ENCODE measurements at regions of chr12 and their contacts with region 1.

Region 1: GRCh38 chr12:70242695-70243509 is at the start of gene CNOT2:
- DNase-seq: peak; percentile 85
- ATAC-seq: peak; percentile 89
- H3K4me3 ChIP-seq: peak within 1 kb of the TSS; percentile 91 to 97 (median 91)
- H3K27ac ChIP-seq: peak within 1 kb of the TSS; percentile 98
- H3K4me1 ChIP-seq: peaks cover 43% of the 10 kb centered on the region
- H3K27me3 ChIP-seq: no peaks in the 10 kb centered on the region; a peak in 1 of 5 replicates
- CTCF ChIP-seq: peak; percentile 24; the same call in 1 of the 2 replicates
- EP300 ChIP-seq: 0 out of 4 replicates have a peak, but pooled peaks of 1 of the 2 experiments have one; percentile 10
- POLR2A ChIP-seq: peak; percentile 84 to 86
- RAD21 ChIP-seq: 0 out of 2 replicates have a peak, but pooled peaks have one; percentile 11
- total RNA-seq, gene CNOT2: 76.6 and 82.7 TPM in 2 replicates

Region 2: DNA sequence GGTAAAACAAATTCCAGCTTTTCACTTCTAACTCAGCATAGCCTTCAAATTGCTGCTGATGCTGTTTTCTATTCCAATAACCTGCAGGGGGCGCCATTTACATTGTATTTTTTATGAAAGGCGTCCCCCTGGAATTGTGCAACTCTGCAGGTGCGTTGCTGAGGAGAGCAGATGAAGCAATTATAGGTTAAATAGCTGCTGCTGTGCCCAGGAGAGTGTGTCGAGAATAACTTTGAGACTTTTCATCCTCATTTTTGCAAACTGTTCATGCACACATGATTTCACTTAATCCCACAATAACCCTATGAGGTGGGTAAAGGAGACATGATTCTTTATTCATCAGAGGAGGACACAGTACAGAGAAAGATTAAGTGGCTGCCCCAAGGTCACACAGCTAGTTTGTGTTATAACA is 342.2 kb before region 1 on chr12:
- CTCF ChIA-PET with region 1: no interaction called
- POLR2A ChIA-PET with region 1: no interaction called
- in situ Hi-C with region 1: no loop called
- intact Hi-C with region 1: loop called (anchors 5 kb)
- DNase-seq: peak; percentile 76
- ATAC-seq: peak; percentile 84
- H3K4me3 ChIP-seq: no peak overlapping the region
- H3K27ac ChIP-seq: no peak overlapping the region
- H3K4me1 ChIP-seq: no peaks in the 10 kb centered on the region
- H3K27me3 ChIP-seq: no peaks in the 10 kb centered on the region
- CTCF ChIP-seq: peak; percentile 80
- EP300 ChIP-seq: no peak
- POLR2A ChIP-seq: no peak
- RAD21 ChIP-seq: peak; percentile 68

Region 3: GRCh38 chr12:70271025-70271424 is 28.1 kb after region 1 on chr12:
- CTCF ChIA-PET with region 1: no interaction called
- POLR2A ChIA-PET with region 1: interaction called, 7 read pairs
- in situ Hi-C with region 1: no loop called
- intact Hi-C with region 1: loop called (anchors 2 kb)
- DNase-seq: peak; percentile 72
- ATAC-seq: peak; percentile 98
- H3K4me3 ChIP-seq: peak overlapping the region in 1 of 3 experiments; percentile 31; a peak in 1 of 6 replicates
- H3K27ac ChIP-seq: peak overlapping the region; percentile 58
- H3K4me1 ChIP-seq: peaks cover 67% of the 10 kb centered on the region
- H3K27me3 ChIP-seq: no peaks in the 10 kb centered on the region
- CTCF ChIP-seq: no peak
- EP300 ChIP-seq: no peak
- POLR2A ChIP-seq: no peak
- RAD21 ChIP-seq: no peak

Region 4: DNA sequence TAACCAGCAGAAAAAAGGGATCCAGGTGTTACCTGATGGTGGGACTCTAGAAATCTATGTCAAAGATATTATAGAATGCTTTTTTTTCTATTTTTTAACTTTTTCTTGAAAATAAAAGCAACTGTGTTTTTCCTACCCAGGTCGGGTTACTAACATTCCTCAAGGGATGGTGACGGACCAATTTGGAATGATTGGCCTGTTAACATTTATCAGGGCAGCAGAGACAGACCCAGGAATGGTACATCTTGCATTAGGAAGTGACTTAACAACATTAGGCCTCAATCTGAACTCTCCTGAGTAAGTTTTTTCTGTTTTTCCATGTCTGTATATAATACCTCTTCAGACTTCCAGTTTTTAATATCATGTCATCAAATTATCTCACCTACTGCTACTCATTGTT is 95.6 kb after region 1 on chr12:
- CTCF ChIA-PET with region 1: no interaction called
- POLR2A ChIA-PET with region 1: no interaction called
- in situ Hi-C with region 1: no loop called
- intact Hi-C with region 1: loop called (anchors 10 kb)
- DNase-seq: no peak
- ATAC-seq: no peak
- H3K4me3 ChIP-seq: no peak overlapping the region
- H3K27ac ChIP-seq: no peak overlapping the region
- H3K4me1 ChIP-seq: no peaks in the 10 kb centered on the region
- H3K27me3 ChIP-seq: no peaks in the 10 kb centered on the region
- CTCF ChIP-seq: no peak
- EP300 ChIP-seq: no peak
- POLR2A ChIP-seq: no peak
- RAD21 ChIP-seq: no peak

Region 5: DNA sequence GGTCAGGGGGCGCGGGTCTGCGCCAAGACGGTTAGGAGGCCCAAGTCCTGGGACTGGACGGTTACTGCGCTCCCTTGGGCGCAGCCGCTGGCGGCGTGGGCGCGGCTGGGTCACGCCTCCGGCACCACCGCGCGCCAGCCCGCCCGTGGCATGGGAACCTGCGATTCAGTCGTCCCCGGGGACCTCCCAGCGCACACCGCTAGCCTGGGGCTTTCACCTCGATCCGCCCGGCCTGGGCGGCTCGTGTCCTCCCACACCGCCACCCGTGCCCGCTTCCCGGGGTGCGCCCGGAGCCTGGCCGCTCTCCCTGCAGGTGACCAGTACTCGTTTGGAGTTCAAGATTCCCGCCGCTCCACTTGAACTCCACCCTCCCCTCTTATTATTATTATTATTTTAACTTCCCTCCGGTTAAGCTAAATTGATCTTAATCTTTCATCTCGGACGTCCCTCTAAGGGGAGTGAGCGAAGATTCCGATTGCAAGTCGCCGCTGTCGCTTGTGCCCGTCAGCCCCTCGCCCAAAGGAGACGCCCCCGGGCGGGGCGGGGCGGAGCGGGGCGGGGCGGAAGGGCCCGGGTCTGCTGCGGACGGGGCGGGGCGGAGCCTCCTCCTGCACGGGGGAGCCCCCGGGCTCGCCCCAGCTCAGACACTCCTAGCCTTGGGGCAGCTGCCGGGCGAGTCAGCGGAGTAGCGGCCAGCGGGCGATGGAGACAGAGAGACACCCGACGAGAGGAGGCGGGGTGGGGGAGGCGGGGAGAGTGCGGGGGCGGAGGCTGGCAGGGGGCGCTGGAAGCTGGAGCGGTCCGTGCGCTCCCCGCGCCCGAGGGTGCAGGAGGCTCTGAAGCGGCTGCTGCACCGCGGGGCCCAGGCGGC is 123.0 kb after region 1 on chr12 and contains the start of gene KCNMB4:
- CTCF ChIA-PET with region 1: no interaction called
- POLR2A ChIA-PET with region 1: no interaction called
- in situ Hi-C with region 1: loop called (anchors 5 kb)
- intact Hi-C with region 1: loop called (anchors 10 kb)
- DNase-seq: peak; percentile 36
- ATAC-seq: peak; percentile 88
- H3K4me3 ChIP-seq: peak within 1 kb of the TSS; percentile 69 to 78 (median 77)
- H3K27ac ChIP-seq: no peak within 1 kb of the TSS
- H3K4me1 ChIP-seq: peaks cover 20% of the 10 kb centered on the region
- H3K27me3 ChIP-seq: peaks cover 0 to 21% of the 10 kb centered on the region in 2 experiments; a peak in 4 of 5 replicates
- CTCF ChIP-seq: no peak
- EP300 ChIP-seq: no peak
- POLR2A ChIP-seq: no peak
- RAD21 ChIP-seq: no peak
- total RNA-seq, gene KCNMB4: 0.84 and 1.7 TPM in 2 replicates

Region 6: GRCh38 chr12:71166869-71167496 is 924.1 kb after region 1 on chr12:
- CTCF ChIA-PET with region 1: no interaction called
- POLR2A ChIA-PET with region 1: no interaction called
- in situ Hi-C with region 1: no loop called
- intact Hi-C with region 1: no loop called
- DNase-seq: no peak
- ATAC-seq: no peak
- H3K4me3 ChIP-seq: no peak overlapping the region
- H3K27ac ChIP-seq: peak overlapping the region; percentile 21
- H3K4me1 ChIP-seq: peaks cover 54% of the 10 kb centered on the region
- H3K27me3 ChIP-seq: no peaks in the 10 kb centered on the region
- CTCF ChIP-seq: no peak
- EP300 ChIP-seq: no peak
- POLR2A ChIP-seq: no peak
- RAD21 ChIP-seq: no peak

Measured in HepG2 (cell line).